ENCODE measurements at regions of chr14 and their contacts with region 1.

Region 1: DNA sequence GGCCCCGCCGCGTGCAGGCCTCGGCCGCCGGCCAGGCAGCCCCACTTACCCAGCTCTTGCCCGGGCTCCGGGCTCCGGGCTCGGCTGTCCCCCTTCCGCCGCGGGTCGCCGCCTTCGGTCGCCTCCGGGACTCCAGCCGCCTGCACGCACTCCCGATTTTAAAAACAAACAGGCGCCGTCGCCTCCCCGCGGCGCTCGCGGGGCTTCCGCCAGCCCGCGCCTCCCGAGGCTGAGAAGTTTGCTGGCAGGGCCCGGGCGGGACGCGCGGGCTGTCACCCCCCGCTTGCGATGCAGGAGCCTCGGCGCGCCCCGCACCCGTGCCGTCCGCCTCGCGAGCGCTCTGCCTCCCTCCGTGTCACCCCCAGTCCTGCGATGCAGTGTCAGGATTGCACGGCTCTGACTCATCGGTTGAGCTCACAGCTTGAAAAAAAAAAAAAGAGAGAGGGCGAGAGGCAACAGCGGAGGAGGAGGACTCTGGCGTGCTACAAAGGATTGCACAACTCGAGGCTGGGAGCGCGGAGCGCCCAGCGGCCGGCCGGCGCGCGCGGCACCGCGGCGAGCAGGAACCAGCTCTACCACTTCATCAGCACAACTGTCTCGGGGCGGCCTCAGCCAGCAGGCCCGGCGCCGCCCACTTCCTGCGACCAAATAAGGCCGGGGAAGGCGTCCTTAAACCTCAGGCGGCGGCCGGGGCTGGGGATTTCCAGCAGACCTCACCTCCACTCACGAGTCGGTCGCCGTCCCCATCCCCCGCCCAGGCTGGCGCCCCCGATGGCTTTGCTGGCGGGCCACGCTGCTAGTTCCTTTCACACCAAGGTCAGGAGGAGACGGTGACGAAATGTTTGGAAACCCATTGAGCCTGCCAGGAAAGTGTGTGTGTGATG is 45.8 kb upstream of the PNMA1 start:
- DNase-seq: peak; percentile 95
- H3K4me3 Mint-ChIP-seq: peak overlapping the region; percentile 83
- H3K27ac Mint-ChIP-seq: peak overlapping the region; percentile 94
- H3K4me1 Mint-ChIP-seq: peaks cover 75% of the 10 kb centered on the region
- H3K27me3 Mint-ChIP-seq: no peaks in the 10 kb centered on the region

Region 2: DNA sequence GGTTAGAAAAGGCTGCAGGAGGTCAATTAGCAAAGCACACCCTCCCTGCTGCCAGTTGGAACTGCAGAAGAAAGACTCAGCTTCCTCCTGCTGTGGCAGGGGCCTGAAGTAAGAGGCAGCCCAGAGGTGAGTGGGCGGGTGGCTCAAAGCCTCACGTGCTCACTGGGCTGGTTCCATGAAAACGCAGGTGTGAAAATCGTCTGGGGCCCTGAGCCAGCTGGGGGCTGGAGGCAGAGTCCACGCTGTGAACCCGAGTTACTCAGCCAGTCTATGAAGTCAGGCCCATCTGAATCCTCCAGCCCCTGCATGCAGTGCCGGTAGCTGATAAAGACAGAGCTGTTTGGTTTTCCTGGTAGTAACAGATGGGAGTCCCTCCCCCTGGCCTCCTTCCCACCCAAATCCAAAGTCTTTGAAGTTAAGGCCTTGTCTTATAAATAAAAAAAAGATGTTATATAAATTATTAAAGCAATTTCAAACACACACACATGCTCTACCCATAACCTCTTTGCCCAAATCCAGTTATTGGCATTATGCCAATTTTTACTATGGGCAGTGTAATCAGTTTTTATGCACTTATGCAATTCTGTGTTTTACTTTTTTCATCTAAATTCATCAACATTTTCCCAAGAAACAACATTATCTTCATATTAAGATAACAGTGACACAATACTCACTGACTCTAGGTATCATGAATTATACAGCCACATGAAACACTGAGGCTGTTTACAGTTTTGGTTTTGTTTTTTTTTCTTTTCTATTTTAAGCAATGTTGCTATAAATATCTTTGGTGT is 12.1 kb after region 1 on chr14:
- intact Hi-C with region 1: loop called (anchors 1 kb)
- DNase-seq: peak; percentile 49
- H3K4me3 Mint-ChIP-seq: peak overlapping the region; percentile 49
- H3K27ac Mint-ChIP-seq: peak overlapping the region; percentile 62
- H3K4me1 Mint-ChIP-seq: peaks cover 57% of the 10 kb centered on the region
- H3K27me3 Mint-ChIP-seq: no peaks in the 10 kb centered on the region

Region 3: GRCh38 chr14:73825551-73826188 is 65.7 kb after region 1 on chr14:
- intact Hi-C with region 1: loop called (anchors 2 kb)
- DNase-seq: peak; percentile 52
- H3K4me3 Mint-ChIP-seq: no peak overlapping the region
- H3K27ac Mint-ChIP-seq: no peak overlapping the region
- H3K4me1 Mint-ChIP-seq: peaks cover 23% of the 10 kb centered on the region
- H3K27me3 Mint-ChIP-seq: peaks cover 11% of the 10 kb centered on the region

Region 4: DNA sequence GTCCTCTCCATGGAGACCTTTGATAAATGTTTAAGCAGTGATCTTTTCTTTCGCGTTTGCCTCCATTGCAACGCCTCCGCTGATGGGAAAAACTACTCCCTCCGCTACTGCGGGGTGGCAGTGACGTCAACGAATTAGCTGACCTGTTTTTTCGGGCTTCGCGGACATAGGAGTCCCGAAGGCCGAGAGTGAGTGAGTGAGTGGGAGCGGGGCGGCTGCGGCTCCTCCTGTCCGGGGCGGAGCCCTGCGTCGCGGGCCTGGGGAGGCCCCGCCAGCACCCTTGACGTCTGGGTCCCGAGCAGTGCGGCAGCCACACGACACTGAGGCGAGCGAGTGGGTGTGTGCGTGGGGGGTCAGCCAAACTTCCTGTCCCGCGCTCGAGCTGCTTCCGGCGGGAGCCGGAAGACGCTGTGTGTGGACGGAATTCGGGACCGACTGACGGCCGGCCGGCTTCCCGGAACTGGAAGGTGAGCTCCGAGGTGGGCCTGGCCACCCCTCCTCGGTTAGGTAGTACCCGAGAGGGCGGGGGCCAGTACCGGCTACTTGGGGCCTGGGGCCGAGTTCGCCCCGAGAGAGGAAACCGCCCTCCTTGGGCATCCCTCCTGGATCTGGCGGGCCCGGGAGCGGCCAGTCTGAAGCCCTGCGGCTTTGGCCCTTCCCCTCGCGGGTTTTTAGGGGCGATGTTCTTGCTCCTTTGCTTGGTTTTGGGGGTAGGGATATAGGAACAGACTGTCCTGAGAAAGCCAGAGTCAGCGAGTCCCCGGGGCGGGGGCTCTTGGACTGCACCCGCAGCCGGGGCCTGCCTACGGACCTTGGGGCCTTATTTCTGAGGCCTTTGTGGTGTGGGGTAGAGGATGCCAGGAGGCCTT is 126.7 kb after region 1 on chr14 and contains the start of gene ZNF410:
- intact Hi-C with region 1: loop called (anchors 2 kb)
- DNase-seq: peak; percentile 84
- H3K4me3 Mint-ChIP-seq: peak within 1 kb of the TSS; percentile 84
- H3K27ac Mint-ChIP-seq: peak within 1 kb of the TSS; percentile 98
- H3K4me1 Mint-ChIP-seq: peaks cover 39% of the 10 kb centered on the region
- H3K27me3 Mint-ChIP-seq: no peaks in the 10 kb centered on the region
- total RNA-seq, gene ZNF410: 77.5 and 82.9 TPM in 2 replicates

Measured in activated T-helper 2 cell treated with anti-CD3 and anti-CD28 coated beads, Interferon-gamma antibody, Interleukin-2, Interleukin-4, amounts not matched to agents 10 μg/mL and 5 μg/mL and 100 μg/mL, durations not matched to agents 14 hours and 24 hours and 36 hours (primary cell).